Endothelial cell of umbilical vein (primary cell): ENCODE measurements at regions of chr3 and their contacts with region 1.

Region 1: GRCh38 chr3:170811928-170812591 is 57.9 kb downstream of the RPL22L1 start:
- DNase-seq: peak; percentile 86
- H3K4me3 ChIP-seq: no peak overlapping the region
- H3K27ac ChIP-seq: peak overlapping the region; percentile 51
- H3K4me1 ChIP-seq: peaks cover 35% of the 10 kb centered on the region
- H3K27me3 ChIP-seq: no peaks in the 10 kb centered on the region
- CTCF ChIP-seq: peak; percentile 80 to 92
- POLR2A ChIP-seq: no peak

Region 2: GRCh38 chr3:170414202-170414663 is 397.8 kb before region 1 on chr3:
- CTCF ChIA-PET with region 1: interaction called, 525 read pairs
- POLR2A ChIA-PET with region 1: interaction called, 5 read pairs
- dilution Hi-C with region 1: no loop called
- intact Hi-C with region 1: loop called (anchors 1 kb)
- DNase-seq: peak; percentile 80
- H3K4me3 ChIP-seq: no peak overlapping the region
- H3K27ac ChIP-seq: no peak overlapping the region
- H3K4me1 ChIP-seq: peaks cover 5% of the 10 kb centered on the region
- H3K27me3 ChIP-seq: no peaks in the 10 kb centered on the region
- CTCF ChIP-seq: peak; percentile 90 to 92
- POLR2A ChIP-seq: no peak

Region 3: DNA sequence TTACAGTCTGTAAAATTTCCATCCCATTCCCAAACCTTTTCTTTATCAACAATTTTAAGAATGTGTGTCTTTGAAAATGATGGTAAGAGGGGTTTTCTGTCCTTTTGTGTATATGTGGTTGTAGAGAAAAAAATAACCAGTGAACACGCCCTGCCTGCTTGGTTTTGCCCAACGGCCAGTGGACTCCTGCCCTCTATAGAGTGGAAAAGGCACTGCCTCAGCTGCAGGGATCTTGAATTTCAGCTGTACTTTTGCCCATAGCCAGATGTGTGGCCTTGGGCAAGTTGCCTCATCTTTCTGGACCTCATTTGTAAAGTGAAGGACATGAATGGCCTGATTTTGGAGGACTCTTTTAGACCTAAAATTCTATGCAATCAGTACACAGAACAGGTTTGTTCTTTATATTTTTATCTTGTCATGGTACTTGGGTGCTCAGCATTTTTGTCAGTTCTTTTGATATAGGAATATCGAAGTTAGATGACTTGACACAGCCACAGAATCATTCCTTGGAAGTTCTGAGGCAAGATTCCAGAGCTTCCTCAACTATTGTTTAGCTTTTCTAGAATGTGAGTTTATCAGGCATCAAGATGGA is 312.4 kb before region 1 on chr3:
- CTCF ChIA-PET with region 1: interaction called, 39 read pairs
- POLR2A ChIA-PET with region 1: no interaction called
- dilution Hi-C with region 1: no loop called
- intact Hi-C with region 1: loop called (anchors 5 kb)
- DNase-seq: peak; percentile 39
- H3K4me3 ChIP-seq: no peak overlapping the region
- H3K27ac ChIP-seq: no peak overlapping the region
- H3K4me1 ChIP-seq: no peaks in the 10 kb centered on the region
- H3K27me3 ChIP-seq: no peaks in the 10 kb centered on the region
- CTCF ChIP-seq: peak; percentile 50 to 63
- POLR2A ChIP-seq: no peak

Region 4: GRCh38 chr3:170689893-170690660 is 122.0 kb before region 1 on chr3:
- CTCF ChIA-PET with region 1: interaction called, 10 read pairs
- POLR2A ChIA-PET with region 1: no interaction called
- dilution Hi-C with region 1: no loop called
- intact Hi-C with region 1: loop called (anchors 1 kb)
- DNase-seq: no peak
- H3K4me3 ChIP-seq: no peak overlapping the region
- H3K27ac ChIP-seq: no peak overlapping the region
- H3K4me1 ChIP-seq: peaks cover 11% of the 10 kb centered on the region
- H3K27me3 ChIP-seq: no peaks in the 10 kb centered on the region
- CTCF ChIP-seq: peak; percentile 59 to 61
- POLR2A ChIP-seq: no peak

Region 5: DNA sequence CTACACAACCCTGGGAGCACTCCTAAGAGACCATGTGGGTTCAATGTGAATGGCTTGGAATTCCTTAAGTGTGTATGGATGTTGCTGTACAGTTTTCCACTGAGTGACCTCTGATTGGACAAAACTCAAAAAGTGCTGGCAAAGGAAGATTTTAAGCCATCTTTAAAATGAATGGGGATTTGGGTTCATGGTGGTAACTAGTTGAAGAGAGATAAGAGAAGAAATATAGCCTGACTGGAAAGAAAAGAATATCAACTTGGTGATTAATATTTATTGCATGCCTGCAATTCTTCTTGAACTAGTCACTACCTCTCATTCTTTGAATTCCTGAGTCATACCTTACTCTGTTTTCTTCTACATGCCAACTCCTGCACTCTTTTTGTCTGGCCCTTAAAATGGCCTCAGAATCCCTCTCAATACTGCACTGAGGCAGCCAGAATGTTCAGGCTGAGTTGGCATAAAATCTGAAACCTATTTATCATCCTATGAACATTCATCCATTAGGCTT is 66.8 kb before region 1 on chr3:
- CTCF ChIA-PET with region 1: interaction called, 8 read pairs
- POLR2A ChIA-PET with region 1: interaction called, 3 read pairs
- dilution Hi-C with region 1: no loop called
- intact Hi-C with region 1: loop called (anchors 1 kb)
- DNase-seq: peak; percentile 89
- H3K4me3 ChIP-seq: no peak overlapping the region
- H3K27ac ChIP-seq: peak overlapping the region; percentile 90
- H3K4me1 ChIP-seq: peaks cover 64% of the 10 kb centered on the region
- H3K27me3 ChIP-seq: no peaks in the 10 kb centered on the region
- CTCF ChIP-seq: no peak
- POLR2A ChIP-seq: peak; percentile 56

Region 6: GRCh38 chr3:170840241-170840859 is 28.3 kb after region 1 on chr3:
- CTCF ChIA-PET with region 1: interaction called, 25 read pairs
- POLR2A ChIA-PET with region 1: interaction called, 3 read pairs
- dilution Hi-C with region 1: no loop called
- intact Hi-C with region 1: loop called (anchors 5 kb)
- DNase-seq: peak; percentile 89
- H3K4me3 ChIP-seq: no peak overlapping the region
- H3K27ac ChIP-seq: no peak overlapping the region
- H3K4me1 ChIP-seq: no peaks in the 10 kb centered on the region
- H3K27me3 ChIP-seq: peaks cover 2 to 3% of the 10 kb centered on the region in 2 experiments
- CTCF ChIP-seq: no peak
- POLR2A ChIP-seq: no peak

Region 7: DNA sequence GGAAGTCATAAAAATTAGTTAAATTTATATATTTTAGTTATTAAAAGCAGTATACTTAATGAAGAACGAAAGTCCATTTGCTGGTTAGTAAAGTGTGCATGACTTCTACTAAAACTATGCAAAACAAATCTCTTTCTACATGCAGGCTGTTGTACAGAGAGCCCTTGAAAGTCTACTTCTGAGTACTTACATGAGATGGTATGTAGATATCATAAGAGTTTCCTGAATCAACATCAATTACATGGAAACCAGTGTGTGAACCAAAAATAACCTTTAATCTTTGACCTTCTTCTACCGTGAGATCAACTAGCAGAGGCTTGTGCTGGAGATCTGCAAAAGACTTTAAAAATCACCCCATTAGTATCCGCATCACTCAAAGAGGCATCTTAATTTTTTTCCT is 256.6 kb after region 1 on chr3:
- CTCF ChIA-PET with region 1: no interaction called
- POLR2A ChIA-PET with region 1: no interaction called
- dilution Hi-C with region 1: no loop called
- intact Hi-C with region 1: no loop called
- DNase-seq: no peak
- H3K4me3 ChIP-seq: no peak overlapping the region
- H3K27ac ChIP-seq: no peak overlapping the region
- H3K4me1 ChIP-seq: no peaks in the 10 kb centered on the region
- H3K27me3 ChIP-seq: no peaks in the 10 kb centered on the region
- CTCF ChIP-seq: no peak
- POLR2A ChIP-seq: no peak